GM23248 (cell line): ENCODE measurements at regions of chr3 and their contacts with region 1.

Region 1: DNA sequence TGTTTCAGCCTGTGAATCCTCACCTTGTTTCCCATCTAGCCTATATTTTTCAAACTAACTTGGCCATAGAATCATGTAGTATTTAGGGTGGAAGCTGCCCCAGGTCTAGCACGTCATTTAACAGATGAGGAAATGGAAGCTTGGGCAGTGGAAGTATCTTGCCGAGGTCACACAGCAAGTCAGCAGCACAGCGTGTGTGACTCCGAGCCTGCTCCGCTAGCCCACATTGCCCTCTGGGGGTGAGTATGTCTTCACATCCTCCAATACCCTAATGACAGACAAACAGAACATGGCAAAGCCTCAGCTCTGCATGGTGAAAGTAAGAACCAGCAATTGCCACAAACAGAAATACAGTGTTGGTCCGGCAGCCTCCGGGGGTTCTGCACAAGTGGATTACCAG is 2.2 kb upstream of the CCR5 start:
- DNase-seq: no peak
- H3K4me3 ChIP-seq: no peak overlapping the region
- H3K27ac ChIP-seq: no peak overlapping the region
- H3K4me1 ChIP-seq: no peaks in the 10 kb centered on the region
- H3K27me3 ChIP-seq: peaks cover 82% of the 10 kb centered on the region

Region 2: DNA sequence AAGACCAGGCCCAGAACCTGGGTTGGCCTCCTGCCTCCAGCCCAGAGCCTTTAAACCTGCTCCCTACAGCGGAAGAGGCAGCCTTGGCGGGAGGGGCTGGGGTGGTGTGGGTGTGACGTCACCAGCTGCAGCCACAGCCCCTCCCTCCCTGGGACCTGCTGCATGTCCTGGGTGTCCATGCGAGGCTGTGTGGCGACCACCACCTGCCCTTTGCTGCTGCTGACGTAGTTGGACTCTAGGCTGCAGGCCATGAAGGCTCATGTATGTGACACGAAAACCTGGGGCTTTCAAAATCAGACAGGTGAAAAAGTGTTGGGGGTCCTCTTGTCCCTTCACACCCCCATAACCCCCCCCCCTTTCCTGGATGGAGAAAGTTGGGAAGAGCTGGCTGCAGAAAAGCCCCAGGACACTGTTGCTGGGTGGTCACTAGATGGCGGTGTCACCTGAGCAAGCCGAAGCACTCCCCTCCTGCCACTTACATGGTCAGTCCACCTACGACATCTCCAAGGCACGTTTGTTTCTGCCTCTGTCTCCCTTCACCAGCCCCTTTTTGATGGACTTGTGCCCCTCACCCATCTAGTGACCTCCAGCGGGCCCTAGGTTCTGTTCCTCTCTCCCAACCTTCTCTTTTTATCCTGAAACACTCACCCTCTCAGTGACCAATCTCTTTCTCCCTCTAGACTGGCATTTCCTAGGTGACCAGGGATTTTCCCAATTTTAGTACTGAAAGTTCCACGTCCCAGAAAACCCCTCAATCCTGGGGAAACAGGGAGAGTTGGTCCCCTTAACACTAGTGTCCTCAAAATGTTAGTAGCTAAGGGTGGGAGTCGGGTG is 607.5 kb before region 1 on chr3:
- in situ Hi-C with region 1: loop called (anchors 25 kb)
- DNase-seq: peak; percentile 79
- H3K4me3 ChIP-seq: no peak overlapping the region
- H3K27ac ChIP-seq: no peak overlapping the region
- H3K4me1 ChIP-seq: no peaks in the 10 kb centered on the region
- H3K27me3 ChIP-seq: peaks cover 18% of the 10 kb centered on the region

Region 3: GRCh38 chr3:45817831-45818522 is 550.6 kb before region 1 on chr3:
- in situ Hi-C with region 1: no loop called
- DNase-seq: peak; percentile 94
- H3K4me3 ChIP-seq: no peak overlapping the region
- H3K27ac ChIP-seq: peak overlapping the region; percentile 9; the same call in 1 of the 2 replicates
- H3K4me1 ChIP-seq: peaks cover 20% of the 10 kb centered on the region
- H3K27me3 ChIP-seq: 0 out of 2 replicates have a peak, but pooled peaks cover 17% of the 10 kb centered on the region

Region 4: DNA sequence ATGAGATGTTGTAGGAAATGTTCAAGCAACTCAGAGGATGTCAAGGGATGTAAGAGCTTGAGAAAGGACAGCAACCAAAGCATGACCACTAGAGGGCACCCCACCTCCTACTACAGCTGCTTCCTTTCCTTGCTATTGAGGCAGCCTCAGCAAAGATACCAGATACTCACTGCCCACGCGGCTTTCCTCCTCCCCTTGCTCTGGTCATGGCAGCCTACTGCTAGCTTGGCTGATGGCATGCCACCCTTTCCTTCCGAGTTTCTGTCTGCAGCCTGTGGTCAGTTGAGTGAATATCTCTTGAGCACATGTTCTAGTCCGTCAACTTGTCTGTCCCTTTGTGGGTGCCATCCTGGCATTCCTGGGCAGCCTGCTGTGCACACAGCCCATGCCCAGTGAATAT is 429.7 kb before region 1 on chr3:
- in situ Hi-C with region 1: loop called (anchors 25 kb)
- DNase-seq: peak; percentile 90
- H3K4me3 ChIP-seq: no peak overlapping the region
- H3K27ac ChIP-seq: no peak overlapping the region
- H3K4me1 ChIP-seq: peaks cover 5% of the 10 kb centered on the region
- H3K27me3 ChIP-seq: no peaks in the 10 kb centered on the region

Region 5: DNA sequence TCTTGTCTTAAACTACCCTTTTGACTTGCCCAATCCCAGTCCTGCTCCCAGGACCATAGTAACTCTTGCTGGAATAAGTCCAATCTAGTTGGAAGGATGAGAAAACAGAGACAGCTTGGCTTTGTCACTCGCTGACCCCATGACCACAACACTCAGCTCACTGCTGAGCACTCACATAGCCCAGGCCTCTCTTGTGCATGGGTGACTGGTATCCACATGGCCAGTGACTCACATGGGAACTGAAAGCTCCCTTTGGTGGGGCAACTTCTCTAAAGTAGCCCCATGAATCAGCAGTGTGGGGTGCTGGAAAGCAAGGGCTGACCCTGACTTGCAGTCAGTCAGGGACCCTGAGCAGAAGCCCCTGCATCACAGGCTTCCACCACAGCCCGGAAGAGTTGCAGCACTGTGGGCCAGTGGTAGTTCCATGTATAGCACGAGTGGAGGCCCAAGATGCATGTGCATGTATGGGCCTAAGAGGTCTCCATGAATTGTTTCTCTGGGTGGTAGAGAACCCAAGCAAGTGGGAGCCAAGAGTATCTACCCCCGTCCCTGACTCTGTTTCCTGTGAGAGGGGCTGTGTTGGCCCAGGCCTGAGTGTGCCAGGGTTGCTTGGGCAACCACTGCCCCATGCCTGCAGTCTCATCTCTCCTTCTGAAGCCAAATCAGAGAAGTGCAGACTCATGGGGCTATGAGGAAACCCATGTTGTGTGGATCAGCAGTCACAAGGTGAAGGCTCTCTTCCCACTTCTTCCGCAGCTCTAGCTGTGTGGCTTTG is 279.1 kb before region 1 on chr3:
- in situ Hi-C with region 1: loop called (anchors 10 kb)
- DNase-seq: peak; percentile 98
- H3K4me3 ChIP-seq: no peak overlapping the region
- H3K27ac ChIP-seq: peak overlapping the region; percentile 71
- H3K4me1 ChIP-seq: peaks cover 17% of the 10 kb centered on the region
- H3K27me3 ChIP-seq: no peaks in the 10 kb centered on the region

Region 6: DNA sequence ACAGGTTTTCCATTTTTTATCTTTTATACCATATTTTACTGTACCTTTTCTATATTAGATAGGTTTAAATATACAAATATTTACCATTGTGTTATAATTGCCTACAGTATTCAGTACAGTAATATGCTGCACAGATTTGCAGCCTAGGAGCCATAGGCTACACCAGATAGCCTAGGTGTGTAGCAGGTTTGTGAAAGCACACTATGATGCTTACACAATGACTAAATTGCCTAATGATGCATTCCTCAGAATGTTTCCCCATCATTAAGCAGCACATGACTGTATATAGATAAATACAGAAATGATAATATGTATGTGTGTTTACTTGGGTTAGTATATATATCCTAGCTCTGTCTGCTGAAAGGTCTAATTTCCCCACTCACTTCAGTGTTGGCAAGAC is 428.9 kb after region 1 on chr3:
- in situ Hi-C with region 1: no loop called
- DNase-seq: no peak
- H3K4me3 ChIP-seq: no peak overlapping the region
- H3K27ac ChIP-seq: no peak overlapping the region
- H3K4me1 ChIP-seq: no peaks in the 10 kb centered on the region
- H3K27me3 ChIP-seq: peaks cover 19% of the 10 kb centered on the region; the same call in 1 of the 2 replicates

Region 7: GRCh38 chr3:47347217-47347801 is 978.7 kb after region 1 on chr3:
- in situ Hi-C with region 1: no loop called
- DNase-seq: peak; percentile 34
- H3K4me3 ChIP-seq: no peak overlapping the region
- H3K27ac ChIP-seq: no peak overlapping the region
- H3K4me1 ChIP-seq: peaks cover 8% of the 10 kb centered on the region; the same call in 1 of the 2 replicates
- H3K27me3 ChIP-seq: no peaks in the 10 kb centered on the region